ENCODE measurements at regions of chr2 and their contacts with region 1.

Region 1: DNA sequence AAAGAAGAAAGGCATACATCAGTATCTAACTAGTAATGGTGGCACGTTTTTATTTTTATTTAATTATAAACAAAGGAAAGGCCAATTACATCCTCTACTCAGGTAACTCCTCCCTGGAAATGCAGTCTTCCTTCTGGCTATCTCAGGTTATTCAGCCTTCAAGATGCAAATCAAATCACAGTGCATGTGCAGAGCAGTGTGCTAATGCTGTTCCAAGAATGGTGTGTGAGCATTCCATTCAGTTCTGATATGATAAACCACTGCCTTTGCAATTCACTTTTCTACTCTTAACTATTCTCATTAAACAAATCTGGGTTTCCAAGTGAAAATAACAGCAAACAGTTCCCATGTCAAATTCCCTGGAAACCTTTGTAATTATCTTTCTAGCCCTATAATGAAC is 38.4 kb downstream of the SEPTIN10 start:
- DNase-seq: no peak
- H3K4me3 ChIP-seq: no peak overlapping the region
- H3K4me3 Mint-ChIP-seq: no peak overlapping the region
- H3K27ac Mint-ChIP-seq: no peak overlapping the region
- H3K4me1 ChIP-seq: no peaks in the 10 kb centered on the region
- H3K4me1 Mint-ChIP-seq: peaks cover 8% of the 10 kb centered on the region
- H3K27me3 ChIP-seq: no peaks in the 10 kb centered on the region
- H3K27me3 Mint-ChIP-seq: no peaks in the 10 kb centered on the region
- CTCF ChIP-seq: no peak

Region 2: DNA sequence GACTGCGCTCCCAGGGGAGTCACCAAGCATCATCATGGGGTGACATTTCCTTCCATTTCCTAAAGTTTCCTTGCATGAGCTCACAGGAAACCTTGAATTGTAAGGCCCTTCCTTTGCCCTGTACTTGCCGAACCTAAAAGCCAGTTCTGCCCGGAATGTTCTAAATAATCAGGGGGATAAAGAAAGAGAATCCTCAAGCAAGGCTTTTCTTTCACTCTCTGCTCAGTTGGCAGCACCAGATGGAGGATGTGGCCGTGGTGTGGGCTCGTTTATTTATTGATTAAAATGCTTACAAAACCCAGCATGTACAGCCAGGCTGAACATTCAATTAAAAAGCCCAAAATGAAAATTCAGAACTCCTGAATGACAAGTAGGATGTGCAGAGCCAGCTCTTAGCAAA is 275.8 kb before region 1 on chr2:
- CTCF ChIA-PET with region 1: interaction called, 11 read pairs
- POLR2A ChIA-PET with region 1: no interaction called
- intact Hi-C with region 1: no loop called
- DNase-seq: no peak
- H3K4me3 ChIP-seq: no peak overlapping the region
- H3K4me3 Mint-ChIP-seq: no peak overlapping the region
- H3K27ac Mint-ChIP-seq: no peak overlapping the region
- H3K4me1 ChIP-seq: no peaks in the 10 kb centered on the region
- H3K4me1 Mint-ChIP-seq: no peaks in the 10 kb centered on the region
- H3K27me3 ChIP-seq: no peaks in the 10 kb centered on the region
- H3K27me3 Mint-ChIP-seq: peaks cover 9% of the 10 kb centered on the region
- CTCF ChIP-seq: no peak

Region 3: GRCh38 chr2:109523536-109524361 is 51.6 kb before region 1 on chr2:
- CTCF ChIA-PET with region 1: no interaction called
- POLR2A ChIA-PET with region 1: no interaction called
- intact Hi-C with region 1: no loop called
- DNase-seq: no peak
- H3K4me3 ChIP-seq: no peak overlapping the region
- H3K4me3 Mint-ChIP-seq: no peak overlapping the region
- H3K27ac Mint-ChIP-seq: no peak overlapping the region
- H3K4me1 ChIP-seq: peaks cover 14% of the 10 kb centered on the region
- H3K4me1 Mint-ChIP-seq: peaks cover 9% of the 10 kb centered on the region
- H3K27me3 ChIP-seq: no peaks in the 10 kb centered on the region
- H3K27me3 Mint-ChIP-seq: no peaks in the 10 kb centered on the region
- CTCF ChIP-seq: no peak

Region 4: GRCh38 chr2:109604597-109604996 is 29.2 kb after region 1 on chr2:
- CTCF ChIA-PET with region 1: no interaction called
- POLR2A ChIA-PET with region 1: no interaction called
- intact Hi-C with region 1: no loop called
- DNase-seq: no peak
- H3K4me3 ChIP-seq: no peak overlapping the region
- H3K4me3 Mint-ChIP-seq: no peak overlapping the region
- H3K27ac Mint-ChIP-seq: no peak overlapping the region
- H3K4me1 ChIP-seq: peaks cover 34% of the 10 kb centered on the region
- H3K4me1 Mint-ChIP-seq: peaks cover 43% of the 10 kb centered on the region
- H3K27me3 ChIP-seq: no peaks in the 10 kb centered on the region
- H3K27me3 Mint-ChIP-seq: no peaks in the 10 kb centered on the region
- CTCF ChIP-seq: no peak

Measured in Caco-2 (cell line).